ENCODE measurements at regions of chr6 and their contacts with region 1.

Region 1: GRCh38 chr6:120774275-120774674 is 560.0 kb downstream of the TBC1D32 start:
- DNase-seq: no peak
- H3K4me3 Mint-ChIP-seq: no peak overlapping the region
- H3K27ac Mint-ChIP-seq: no peak overlapping the region
- H3K4me1 Mint-ChIP-seq: no peaks in the 10 kb centered on the region
- H3K27me3 Mint-ChIP-seq: no peaks in the 10 kb centered on the region
- CTCF ChIP-seq: no peak

Region 2: DNA sequence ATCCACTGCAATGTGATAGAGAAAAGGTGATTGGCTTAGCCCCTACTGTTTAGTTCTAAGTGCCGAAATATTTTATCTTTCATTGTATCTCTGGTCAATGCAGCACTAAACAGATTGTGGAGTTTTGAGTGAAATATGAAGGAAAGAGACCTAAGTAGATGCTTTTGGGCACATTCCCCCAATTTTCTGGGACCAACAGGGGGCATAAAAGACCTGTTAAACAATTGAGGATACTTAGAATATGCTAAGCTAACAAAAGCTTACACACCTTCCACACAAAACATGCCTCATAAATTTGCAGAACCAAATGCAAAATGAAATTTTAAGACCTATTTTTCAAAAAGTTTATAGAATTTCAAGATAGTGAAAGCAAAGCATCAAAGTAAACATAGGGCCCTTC is 186.9 kb before region 1 on chr6:
- CTCF ChIA-PET with region 1: no interaction called
- POLR2A ChIA-PET with region 1: no interaction called
- intact Hi-C with region 1: no loop called
- DNase-seq: no peak
- H3K4me3 Mint-ChIP-seq: no peak overlapping the region
- H3K27ac Mint-ChIP-seq: no peak overlapping the region
- H3K4me1 Mint-ChIP-seq: no peaks in the 10 kb centered on the region
- H3K27me3 Mint-ChIP-seq: peaks cover 8% of the 10 kb centered on the region
- CTCF ChIP-seq: no peak

Region 3: DNA sequence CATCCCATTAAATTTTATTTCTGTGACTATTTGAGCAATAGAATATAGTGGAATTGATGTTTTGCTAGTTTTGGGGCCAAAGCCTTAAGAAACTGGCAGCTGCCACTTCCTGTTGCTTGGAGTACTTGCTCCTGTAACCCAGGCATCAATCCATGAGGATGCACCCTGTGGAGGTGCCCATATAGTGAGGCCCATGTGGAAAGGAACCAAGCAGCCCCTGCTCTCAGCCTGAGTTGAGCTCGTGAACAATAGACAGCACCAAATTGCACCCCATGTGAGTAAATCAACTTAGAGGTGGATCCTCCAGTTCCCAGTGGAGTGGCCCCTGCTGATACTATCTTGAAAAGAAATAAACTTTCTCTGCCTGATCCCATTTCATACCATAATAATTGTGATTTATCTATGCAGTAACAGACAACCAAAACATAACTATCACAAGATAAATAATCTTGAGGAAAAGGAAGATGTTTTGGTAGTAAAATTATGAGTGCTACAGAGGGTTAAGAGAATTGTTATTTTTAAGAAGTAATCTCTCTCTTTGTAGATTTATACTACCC is 78.1 kb after region 1 on chr6:
- CTCF ChIA-PET with region 1: no interaction called
- POLR2A ChIA-PET with region 1: no interaction called
- intact Hi-C with region 1: loop called (anchors 5 kb)
- DNase-seq: no peak
- H3K4me3 Mint-ChIP-seq: no peak overlapping the region
- H3K27ac Mint-ChIP-seq: no peak overlapping the region
- H3K4me1 Mint-ChIP-seq: no peaks in the 10 kb centered on the region
- H3K27me3 Mint-ChIP-seq: no peaks in the 10 kb centered on the region
- CTCF ChIP-seq: no peak

Measured in MCF 10A (cell line).